Cardiac septum (tissue), 1 donor: ENCODE measurements at regions of chr1 and their contacts with region 1.

Region 1: DNA sequence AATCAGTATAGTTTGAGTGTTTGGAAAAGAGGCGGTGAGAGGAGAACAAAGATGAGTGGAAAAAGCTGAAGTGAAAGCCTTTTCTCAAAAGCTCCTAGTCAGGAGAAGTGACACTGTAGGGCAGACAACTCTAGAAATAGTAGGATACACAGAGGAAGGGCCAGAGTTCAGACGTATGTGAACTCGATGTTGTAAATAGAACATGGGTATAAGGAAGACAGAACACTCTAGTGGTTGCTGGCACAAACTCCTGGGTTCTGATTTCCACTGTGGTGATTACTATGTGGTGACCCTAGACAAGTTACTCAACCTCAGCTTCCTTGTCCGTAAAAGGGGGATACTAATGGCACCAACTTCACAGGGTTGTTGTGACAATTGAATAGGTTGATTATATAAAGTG is 30.2 kb upstream of the MGST3 start:
- DNase-seq: no peak

Region 2: GRCh38 chr1:165697881-165698760 is 97.3 kb after region 1 on chr1 and contains the start of gene ALDH9A1:
- intact Hi-C with region 1: loop called (anchors 5 kb)
- DNase-seq: peak; percentile 96
- total RNA-seq, gene ALDH9A1: 61.3 TPM